ENCODE measurements at regions of chr15 and their contacts with region 1.

Region 1: GRCh38 chr15:67433495-67434099 is 87.3 kb upstream of the C15orf61 start:
- DNase-seq: peak; percentile 66
- H3K4me3 ChIP-seq: no peak overlapping the region
- H3K27ac ChIP-seq: no peak overlapping the region
- H3K4me1 ChIP-seq: no peaks in the 10 kb centered on the region
- H3K27me3 ChIP-seq: no peaks in the 10 kb centered on the region
- CTCF ChIP-seq: peak; percentile 69 to 77
- POLR2A ChIP-seq: no peak

Region 2: GRCh38 chr15:66901336-66902100 is 532.1 kb before region 1 on chr15:
- CTCF ChIA-PET with region 1: no interaction called
- POLR2A ChIA-PET with region 1: no interaction called
- dilution Hi-C with region 1: no loop called
- intact Hi-C with region 1: loop called (anchors 1 kb)
- DNase-seq: peak; percentile 20
- H3K4me3 ChIP-seq: no peak overlapping the region
- H3K27ac ChIP-seq: no peak overlapping the region
- H3K4me1 ChIP-seq: peaks cover 6% of the 10 kb centered on the region
- H3K27me3 ChIP-seq: no peaks in the 10 kb centered on the region
- CTCF ChIP-seq: no peak
- POLR2A ChIP-seq: no peak

Region 3: DNA sequence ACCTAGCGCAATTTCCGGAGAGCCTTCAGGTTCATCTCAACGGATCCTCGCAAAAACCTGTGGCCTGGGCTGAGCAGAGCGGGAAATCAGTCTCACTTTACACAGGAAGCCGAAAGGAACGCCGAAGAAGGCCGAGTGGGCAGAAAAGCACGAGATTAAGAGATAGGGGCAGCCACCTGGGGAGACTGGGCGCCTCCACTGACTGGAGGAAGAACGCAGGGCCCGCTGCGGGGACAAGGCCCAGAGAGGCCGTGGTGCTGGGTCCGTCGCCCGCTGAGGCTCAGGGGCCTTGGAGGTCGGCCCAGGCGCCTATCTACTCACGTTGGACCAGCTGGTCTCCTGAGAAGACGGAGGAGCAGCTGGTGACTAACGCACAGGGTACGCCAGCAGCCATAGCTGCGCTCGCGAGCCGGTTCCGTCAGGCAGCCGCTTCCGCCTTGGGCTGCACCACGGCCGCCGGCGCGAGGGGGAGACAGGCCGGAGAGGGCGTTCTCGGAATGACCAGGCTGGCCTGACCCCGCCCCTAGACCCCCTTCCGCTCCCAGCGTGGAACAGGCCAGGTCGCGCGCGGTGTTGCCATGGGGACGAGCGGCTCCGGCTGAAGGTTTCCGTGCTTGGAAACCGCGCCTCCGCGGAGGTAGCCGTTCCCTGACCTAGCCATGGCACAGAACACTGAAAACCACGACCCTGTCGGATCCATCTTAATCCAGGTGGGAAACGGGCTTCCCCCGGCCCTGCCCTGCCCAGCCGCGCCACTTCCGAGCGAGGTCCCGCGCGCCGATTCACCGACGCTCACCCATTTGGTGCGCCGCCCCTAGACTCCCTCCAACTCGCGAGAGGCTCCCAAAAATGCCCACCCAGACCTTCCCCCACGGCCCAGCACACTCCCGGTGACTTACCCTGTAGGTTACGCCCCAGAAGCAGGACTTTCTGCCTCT is 179.1 kb before region 1 on chr15 and contains the starts of genes AAGAB and IQCH:
- CTCF ChIA-PET with region 1: no interaction called
- POLR2A ChIA-PET with region 1: no interaction called
- dilution Hi-C with region 1: no loop called
- intact Hi-C with region 1: loop called (anchors 5 kb)
- DNase-seq: peak; percentile 98
- H3K4me3 ChIP-seq: peak within 1 kb of the TSS; percentile 90 to 97 (median 95)
- H3K27ac ChIP-seq: peak within 1 kb of the TSS; percentile 93
- H3K4me1 ChIP-seq: peaks cover 7% of the 10 kb centered on the region
- H3K27me3 ChIP-seq: no peaks in the 10 kb centered on the region
- CTCF ChIP-seq: no peak
- POLR2A ChIP-seq: peak; percentile 84
- total RNA-seq, gene AAGAB: 38.0 and 42.6 TPM in 2 replicates
- total RNA-seq, gene IQCH: 0.51 and 2.6 TPM in 2 replicates

Region 4: DNA sequence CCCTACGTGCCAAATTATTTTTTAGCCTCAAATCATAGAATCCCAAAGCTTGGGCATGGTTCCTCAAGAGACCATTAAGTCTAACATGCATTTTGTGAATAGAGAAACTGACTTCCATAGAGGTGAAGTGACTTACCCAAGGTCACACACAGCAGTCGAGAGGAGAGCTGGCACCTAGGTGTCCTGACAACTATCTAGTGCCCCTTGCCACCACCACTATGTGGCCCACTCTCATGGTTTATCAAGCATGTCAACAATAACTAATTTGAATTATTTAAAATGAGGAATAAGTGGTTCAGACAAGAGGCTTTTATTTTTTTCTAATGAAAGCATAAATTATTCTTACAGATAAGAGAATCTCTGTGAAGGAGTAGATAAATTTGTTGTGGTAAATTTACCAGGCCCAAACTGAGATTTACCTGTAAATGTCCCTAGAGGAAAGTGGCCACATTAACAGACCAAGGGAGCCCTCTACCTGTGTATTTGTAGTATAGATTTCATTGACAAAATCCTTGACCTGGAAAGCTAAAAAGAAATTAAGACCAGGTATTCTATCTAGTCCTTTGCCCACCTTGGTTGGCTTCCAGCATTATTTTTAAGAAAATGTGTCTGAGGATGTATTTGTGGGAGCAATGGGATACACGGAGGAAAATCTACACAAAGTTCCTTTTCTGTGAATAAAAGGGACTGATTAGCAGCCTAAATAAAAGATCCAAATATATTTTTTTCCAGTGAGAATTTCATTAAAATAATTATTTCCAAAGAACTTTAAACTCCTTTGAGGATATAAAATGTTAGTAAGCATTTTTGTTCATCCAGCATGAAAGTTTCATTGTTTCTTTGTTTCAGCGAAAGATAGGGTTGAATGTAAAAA is 129.9 kb before region 1 on chr15:
- CTCF ChIA-PET with region 1: interaction called, 8 read pairs
- POLR2A ChIA-PET with region 1: no interaction called
- dilution Hi-C with region 1: no loop called
- intact Hi-C with region 1: loop called (anchors 5 kb)
- DNase-seq: peak; percentile 49
- H3K4me3 ChIP-seq: no peak overlapping the region
- H3K27ac ChIP-seq: no peak overlapping the region
- H3K4me1 ChIP-seq: no peaks in the 10 kb centered on the region
- H3K27me3 ChIP-seq: no peaks in the 10 kb centered on the region
- CTCF ChIP-seq: no peak
- POLR2A ChIP-seq: no peak

Region 5: GRCh38 chr15:67383899-67384298 is 49.7 kb before region 1 on chr15:
- CTCF ChIA-PET with region 1: interaction called, 41 read pairs
- POLR2A ChIA-PET with region 1: no interaction called
- dilution Hi-C with region 1: no loop called
- intact Hi-C with region 1: loop called (anchors 1 kb)
- DNase-seq: no peak
- H3K4me3 ChIP-seq: no peak overlapping the region
- H3K27ac ChIP-seq: no peak overlapping the region
- H3K4me1 ChIP-seq: no peaks in the 10 kb centered on the region
- H3K27me3 ChIP-seq: peaks cover 0 to 13% of the 10 kb centered on the region in 2 experiments
- CTCF ChIP-seq: no peak
- POLR2A ChIP-seq: no peak

Region 6: DNA sequence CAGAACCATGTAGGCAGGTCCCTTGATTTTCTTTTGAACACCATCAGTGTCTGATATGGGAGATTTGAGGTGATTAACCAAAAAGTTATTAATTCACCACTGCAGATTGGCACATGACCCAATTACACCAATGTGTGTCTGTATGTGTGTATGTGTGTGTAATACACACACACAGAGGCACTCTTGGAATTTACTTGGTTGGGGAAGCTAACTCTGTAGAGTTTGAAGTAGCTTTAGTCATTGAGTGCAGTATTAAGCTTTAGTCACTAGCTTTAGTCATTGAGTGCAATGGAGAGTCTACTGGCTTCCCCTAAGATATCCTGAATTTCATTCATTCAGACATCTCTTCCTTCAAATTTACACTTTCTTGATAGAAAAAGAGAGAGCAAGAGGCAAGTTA is 22.1 kb before region 1 on chr15:
- CTCF ChIA-PET with region 1: interaction called, 10 read pairs
- POLR2A ChIA-PET with region 1: no interaction called
- dilution Hi-C with region 1: no loop called
- intact Hi-C with region 1: no loop called
- DNase-seq: no peak
- H3K4me3 ChIP-seq: no peak overlapping the region
- H3K27ac ChIP-seq: no peak overlapping the region
- H3K4me1 ChIP-seq: peaks cover 9% of the 10 kb centered on the region
- H3K27me3 ChIP-seq: no peaks in the 10 kb centered on the region
- CTCF ChIP-seq: no peak
- POLR2A ChIP-seq: no peak

Region 7: DNA sequence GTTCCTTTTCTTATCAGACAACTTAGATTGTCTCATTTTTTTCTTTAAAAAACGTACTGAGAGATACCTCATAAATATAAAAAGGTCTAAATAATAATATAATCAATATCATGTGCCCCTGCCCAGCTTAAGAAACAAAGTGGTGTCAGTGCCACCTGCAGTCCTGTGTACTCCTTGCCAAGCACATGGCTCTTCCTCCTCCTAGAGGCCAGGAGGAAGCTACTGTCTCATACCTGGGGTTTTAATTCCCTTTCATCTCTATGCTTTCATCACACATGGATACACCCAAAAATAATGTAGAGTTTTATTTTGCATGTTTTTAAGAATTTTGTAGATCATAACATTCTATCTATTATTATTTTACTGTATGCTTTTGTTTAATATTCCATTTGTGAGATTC is 11.3 kb before region 1 on chr15:
- CTCF ChIA-PET with region 1: interaction called, 10 read pairs
- POLR2A ChIA-PET with region 1: no interaction called
- dilution Hi-C with region 1: no loop called
- intact Hi-C with region 1: no loop called
- DNase-seq: no peak
- H3K4me3 ChIP-seq: no peak overlapping the region
- H3K27ac ChIP-seq: no peak overlapping the region
- H3K4me1 ChIP-seq: no peaks in the 10 kb centered on the region
- H3K27me3 ChIP-seq: no peaks in the 10 kb centered on the region
- CTCF ChIP-seq: no peak
- POLR2A ChIP-seq: no peak

Measured in endothelial cell of umbilical vein (primary cell).